Caco-2 (cell line): ENCODE measurements at regions of chr2 and their contacts with region 1.

Region 1: DNA sequence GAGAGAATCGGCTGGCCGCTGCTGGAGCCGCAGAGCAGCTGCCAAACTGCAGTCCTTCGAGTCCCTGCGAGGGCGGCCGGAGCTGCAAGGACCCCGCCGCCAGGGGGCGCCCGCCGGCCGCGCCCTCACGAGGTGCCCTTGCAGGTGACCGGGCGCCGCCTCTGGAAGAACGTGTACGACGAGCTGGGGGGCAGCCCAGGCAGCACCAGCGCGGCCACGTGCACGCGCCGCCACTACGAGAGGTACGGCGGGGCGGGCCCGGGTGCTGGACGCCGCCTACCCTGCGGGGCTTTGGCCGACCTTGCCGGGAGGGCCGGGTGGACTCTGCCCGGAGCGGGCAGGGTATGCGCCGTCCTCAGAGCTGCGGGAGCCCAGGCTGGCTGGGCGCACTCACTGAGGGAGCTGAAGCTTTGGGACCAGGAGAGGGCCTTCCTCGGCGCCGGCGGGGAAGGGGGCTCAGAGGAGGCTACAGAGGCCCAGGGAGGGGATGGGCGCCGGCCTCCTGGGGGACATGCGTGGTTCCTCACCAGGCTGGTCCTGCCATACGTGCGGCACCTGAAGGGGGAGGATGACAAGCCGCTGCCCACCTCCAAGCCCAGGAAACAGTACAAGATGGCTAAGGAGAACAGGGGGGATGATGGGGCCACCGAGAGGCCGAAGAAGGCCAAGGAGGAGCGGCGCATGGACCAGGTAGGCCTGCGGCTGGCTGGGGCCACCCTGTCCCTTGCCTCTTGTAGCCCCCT is 13.7 kb downstream of the ARID5A start:
- DNase-seq: peak; percentile 32 to 70
- H3K4me3 ChIP-seq: no peak overlapping the region
- H3K4me3 Mint-ChIP-seq: no peak overlapping the region
- H3K27ac Mint-ChIP-seq: no peak overlapping the region
- H3K4me1 ChIP-seq: peaks cover 2% of the 10 kb centered on the region
- H3K4me1 Mint-ChIP-seq: no peaks in the 10 kb centered on the region
- H3K27me3 ChIP-seq: no peaks in the 10 kb centered on the region
- H3K27me3 Mint-ChIP-seq: no peaks in the 10 kb centered on the region
- CTCF ChIP-seq: peak; percentile 22 to 62

Region 2: GRCh38 chr2:96485751-96486651 is 64.2 kb before region 1 on chr2:
- CTCF ChIA-PET with region 1: no interaction called
- POLR2A ChIA-PET with region 1: no interaction called
- intact Hi-C with region 1: no loop called
- DNase-seq: no peak
- H3K4me3 ChIP-seq: no peak overlapping the region
- H3K4me3 Mint-ChIP-seq: no peak overlapping the region
- H3K27ac Mint-ChIP-seq: no peak overlapping the region
- H3K4me1 ChIP-seq: no peaks in the 10 kb centered on the region
- H3K4me1 Mint-ChIP-seq: no peaks in the 10 kb centered on the region
- H3K27me3 ChIP-seq: no peaks in the 10 kb centered on the region
- H3K27me3 Mint-ChIP-seq: no peaks in the 10 kb centered on the region
- CTCF ChIP-seq: no peak

Region 3: GRCh38 chr2:96527286-96528005 is 22.8 kb before region 1 on chr2:
- CTCF ChIA-PET with region 1: no interaction called
- POLR2A ChIA-PET with region 1: no interaction called
- intact Hi-C with region 1: no loop called
- DNase-seq: no peak
- H3K4me3 ChIP-seq: no peak overlapping the region
- H3K4me3 Mint-ChIP-seq: no peak overlapping the region
- H3K27ac Mint-ChIP-seq: no peak overlapping the region
- H3K4me1 ChIP-seq: no peaks in the 10 kb centered on the region
- H3K4me1 Mint-ChIP-seq: peaks cover 5% of the 10 kb centered on the region
- H3K27me3 ChIP-seq: no peaks in the 10 kb centered on the region
- H3K27me3 Mint-ChIP-seq: no peaks in the 10 kb centered on the region
- CTCF ChIP-seq: no peak

Region 4: DNA sequence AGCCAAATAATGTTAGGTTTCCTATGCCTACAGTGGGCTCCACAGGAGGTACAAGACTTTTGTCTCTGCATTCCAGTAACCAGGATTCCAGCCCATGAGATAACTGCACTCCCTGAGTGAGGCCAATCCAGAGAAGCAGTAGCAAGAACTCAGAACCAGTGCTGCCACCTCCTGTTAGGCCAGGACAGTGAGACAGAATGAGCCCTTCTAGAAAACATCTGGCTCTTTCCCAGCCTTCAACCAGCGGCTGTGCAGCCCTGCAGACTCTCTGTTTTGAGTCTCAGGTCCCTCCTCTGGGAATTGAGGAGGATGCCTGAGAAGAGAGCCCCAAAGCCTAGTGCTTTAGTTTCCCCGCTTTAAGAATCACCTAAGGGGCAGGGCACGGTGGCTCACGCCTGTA is 30.6 kb after region 1 on chr2:
- CTCF ChIA-PET with region 1: interaction called, 4 read pairs
- POLR2A ChIA-PET with region 1: no interaction called
- intact Hi-C with region 1: loop called (anchors 1 kb)
- DNase-seq: peak; percentile 56 to 60
- H3K4me3 ChIP-seq: no peak overlapping the region
- H3K4me3 Mint-ChIP-seq: no peak overlapping the region
- H3K27ac Mint-ChIP-seq: no peak overlapping the region
- H3K4me1 ChIP-seq: no peaks in the 10 kb centered on the region
- H3K4me1 Mint-ChIP-seq: no peaks in the 10 kb centered on the region
- H3K27me3 ChIP-seq: no peaks in the 10 kb centered on the region
- H3K27me3 Mint-ChIP-seq: no peaks in the 10 kb centered on the region
- CTCF ChIP-seq: peak; percentile 25 to 31